ENCODE measurements at regions of chr11 and their contacts with region 1.

Region 1: GRCh38 chr11:66421492-66422205 is 814 bp downstream of the NPAS4 start:
- DNase-seq: peak; percentile 85 to 99
- H3K4me3 ChIP-seq: peak overlapping the region; percentile 17 to 61 (median 54); a peak in 7 of 8 replicates
- H3K27ac ChIP-seq: no peak overlapping the region
- H3K4me1 ChIP-seq: peaks cover 3 to 20% (median 8%) of the 10 kb centered on the region in 4 experiments
- H3K27me3 ChIP-seq: peaks cover 13 to 28% (median 26%) of the 10 kb centered on the region in 4 experiments
- CTCF ChIP-seq: peak in 1 of 3 experiments; percentile 25; a peak in 1 of 4 replicates
- EP300 ChIP-seq: peak; percentile 39 to 59; a peak in 2 of 3 replicates
- POLR2A ChIP-seq: peak in 1 of 2 experiments; percentile 22; a peak in 1 of 3 replicates
- RAD21 ChIP-seq: peak in 1 of 2 experiments; percentile 49; a peak in 2 of 4 replicates

Region 2: DNA sequence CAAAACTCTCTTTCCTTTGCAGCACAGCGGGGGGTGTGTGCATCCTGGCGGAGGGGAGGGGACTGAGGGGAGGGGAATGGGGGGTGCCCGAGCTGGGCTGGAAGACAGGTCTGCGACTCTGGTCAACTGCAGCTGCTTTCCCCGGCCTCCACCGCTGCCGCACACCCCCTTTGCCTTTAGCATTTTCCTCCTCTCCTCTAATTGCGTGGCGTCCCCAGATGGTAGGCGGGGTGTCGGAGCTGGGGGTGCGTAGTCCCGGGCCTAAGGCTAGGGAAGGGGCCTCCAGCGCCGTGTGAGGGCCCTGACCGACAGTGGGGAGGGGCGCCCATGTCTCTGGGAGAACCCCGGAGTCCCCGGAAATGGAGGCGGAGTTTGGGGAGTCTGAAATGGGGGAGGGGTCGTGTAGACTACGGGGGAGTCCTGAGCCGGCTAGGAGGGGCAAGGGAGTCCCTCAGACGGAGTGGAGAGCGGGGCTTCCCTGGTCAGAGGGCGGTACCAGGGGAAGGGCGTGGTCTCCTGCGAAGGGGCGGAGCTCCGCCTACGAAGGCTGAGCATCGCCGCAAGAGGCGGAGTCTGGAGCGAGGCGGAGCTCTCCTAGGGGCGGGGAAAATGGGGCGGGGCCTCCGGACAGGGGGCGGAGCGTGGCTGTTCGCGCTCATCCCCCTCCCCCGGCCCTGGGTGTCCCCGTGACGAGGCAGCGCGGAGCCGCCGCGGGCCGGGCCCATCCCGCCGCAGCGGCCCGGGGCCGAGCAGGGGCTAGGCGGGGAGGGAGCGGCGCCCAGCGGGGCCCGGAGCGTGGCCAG is 44.8 kb after region 1 on chr11 and contains the start of gene PELI3:
- CTCF ChIA-PET with region 1: interaction called, 11 read pairs
- POLR2A ChIA-PET with region 1: interaction called, 6 read pairs
- DNase-seq: peak; percentile 90 to 99
- H3K4me3 ChIP-seq: peak within 1 kb of the TSS; percentile 58 to 78 (median 70)
- H3K27ac ChIP-seq: peak within 1 kb of the TSS; percentile 21; the same call in 1 of the 2 replicates
- H3K4me1 ChIP-seq: peaks cover 7 to 25% (median 14%) of the 10 kb centered on the region in 4 experiments
- H3K27me3 ChIP-seq: no peaks in the 10 kb centered on the region; a peak in 1 of 7 replicates
- CTCF ChIP-seq: no peak
- EP300 ChIP-seq: no peak
- POLR2A ChIP-seq: peak in 1 of 2 experiments; percentile 49; a peak in 1 of 3 replicates
- RAD21 ChIP-seq: peak in 1 of 2 experiments; percentile 12; a peak in 1 of 4 replicates
- total RNA-seq, gene PELI3: 7.6 TPM in 2 replicates